Activated naive CD8-positive, alpha-beta T cell treated with anti-CD3 and anti-CD28 coated beads, Interleukin-2, amount 10 ng/mL, durations not matched to agents 7 days and 5 days (primary cell): ENCODE measurements at regions of chr15 and their contacts with region 1.

Region 1: GRCh38 chr15:31365655-31366127 is 39.1 kb downstream of the KLF13 start:
- DNase-seq: peak; percentile 84
- ATAC-seq: peak; percentile 57
- H3K4me3 Mint-ChIP-seq: peak overlapping the region; percentile 84
- H3K27ac Mint-ChIP-seq: peak overlapping the region; percentile 100
- H3K4me1 Mint-ChIP-seq: peaks cover 93% of the 10 kb centered on the region
- H3K27me3 Mint-ChIP-seq: no peaks in the 10 kb centered on the region

Region 2: DNA sequence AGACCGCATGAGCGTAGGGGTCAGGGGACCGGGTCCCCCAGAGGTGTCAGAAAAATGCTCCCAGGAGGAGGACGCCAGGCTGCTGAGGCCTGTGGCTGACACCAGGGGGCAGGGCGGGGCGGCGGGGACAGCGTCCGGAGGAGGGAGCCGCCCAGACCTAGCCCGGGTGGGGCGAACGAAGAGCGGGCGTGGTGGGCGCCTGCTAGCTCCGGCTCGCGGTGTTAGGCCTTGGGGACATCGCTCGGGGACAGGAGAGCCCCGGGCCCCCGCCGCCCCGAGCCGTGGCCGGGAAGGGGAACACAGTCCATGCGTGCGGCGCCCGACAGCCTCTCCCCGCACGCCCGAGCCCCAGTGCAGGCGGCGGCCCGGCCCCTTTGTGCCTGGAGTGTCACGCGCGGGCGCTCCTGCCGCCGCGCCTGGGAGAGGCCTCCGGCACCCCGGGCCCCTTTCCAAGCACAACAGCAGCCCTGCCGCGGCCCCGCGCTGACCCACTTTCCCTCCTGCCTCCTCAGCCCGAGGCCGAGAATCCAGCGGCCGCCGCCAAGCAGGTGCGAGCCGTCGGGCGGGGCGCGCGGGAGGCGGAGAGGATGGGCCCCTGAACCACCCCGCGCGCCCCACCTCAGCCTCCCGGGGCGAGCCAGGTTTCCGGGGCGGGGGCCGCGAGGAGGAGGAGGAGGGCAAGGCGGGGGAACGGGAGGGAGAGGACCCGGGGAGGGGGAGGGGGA is 150.0 kb before region 1 on chr15:
- POLR2A ChIA-PET with region 1: interaction called, 12 read pairs
- DNase-seq: peak; percentile 92
- ATAC-seq: peak; percentile 74
- H3K4me3 Mint-ChIP-seq: peak overlapping the region; percentile 72
- H3K27ac Mint-ChIP-seq: peak overlapping the region; percentile 96
- H3K4me1 Mint-ChIP-seq: peaks cover 29% of the 10 kb centered on the region
- H3K27me3 Mint-ChIP-seq: peaks cover 3% of the 10 kb centered on the region

Region 3: GRCh38 chr15:31352911-31353811 is 12.5 kb before region 1 on chr15:
- POLR2A ChIA-PET with region 1: interaction called, 390 read pairs
- DNase-seq: peak; percentile 61
- ATAC-seq: peak; percentile 42
- H3K4me3 Mint-ChIP-seq: peak overlapping the region; percentile 80
- H3K27ac Mint-ChIP-seq: peak overlapping the region; percentile 100
- H3K4me1 Mint-ChIP-seq: peaks cover 83% of the 10 kb centered on the region
- H3K27me3 Mint-ChIP-seq: no peaks in the 10 kb centered on the region

Region 4: GRCh38 chr15:31381801-31382712 is 16.4 kb after region 1 on chr15:
- POLR2A ChIA-PET with region 1: interaction called, 11 read pairs
- DNase-seq: no peak
- ATAC-seq: no peak
- H3K4me3 Mint-ChIP-seq: no peak overlapping the region
- H3K27ac Mint-ChIP-seq: peak overlapping the region; percentile 8
- H3K4me1 Mint-ChIP-seq: peaks cover 45% of the 10 kb centered on the region
- H3K27me3 Mint-ChIP-seq: no peaks in the 10 kb centered on the region

Region 5: GRCh38 chr15:31391687-31392671 is 26.3 kb after region 1 on chr15:
- POLR2A ChIA-PET with region 1: interaction called, 49 read pairs
- DNase-seq: peak; percentile 93
- ATAC-seq: peak; percentile 80
- H3K4me3 Mint-ChIP-seq: peak overlapping the region; percentile 93
- H3K27ac Mint-ChIP-seq: peak overlapping the region; percentile 92
- H3K4me1 Mint-ChIP-seq: peaks cover 37% of the 10 kb centered on the region
- H3K27me3 Mint-ChIP-seq: no peaks in the 10 kb centered on the region

Region 6: GRCh38 chr15:31472636-31473384 is 107.1 kb after region 1 on chr15:
- POLR2A ChIA-PET with region 1: interaction called, 17 read pairs
- DNase-seq: peak; percentile 60
- ATAC-seq: peak; percentile 89
- H3K4me3 Mint-ChIP-seq: peak overlapping the region; percentile 80
- H3K27ac Mint-ChIP-seq: peak overlapping the region; percentile 91
- H3K4me1 Mint-ChIP-seq: peaks cover 38% of the 10 kb centered on the region
- H3K27me3 Mint-ChIP-seq: no peaks in the 10 kb centered on the region

Region 7: DNA sequence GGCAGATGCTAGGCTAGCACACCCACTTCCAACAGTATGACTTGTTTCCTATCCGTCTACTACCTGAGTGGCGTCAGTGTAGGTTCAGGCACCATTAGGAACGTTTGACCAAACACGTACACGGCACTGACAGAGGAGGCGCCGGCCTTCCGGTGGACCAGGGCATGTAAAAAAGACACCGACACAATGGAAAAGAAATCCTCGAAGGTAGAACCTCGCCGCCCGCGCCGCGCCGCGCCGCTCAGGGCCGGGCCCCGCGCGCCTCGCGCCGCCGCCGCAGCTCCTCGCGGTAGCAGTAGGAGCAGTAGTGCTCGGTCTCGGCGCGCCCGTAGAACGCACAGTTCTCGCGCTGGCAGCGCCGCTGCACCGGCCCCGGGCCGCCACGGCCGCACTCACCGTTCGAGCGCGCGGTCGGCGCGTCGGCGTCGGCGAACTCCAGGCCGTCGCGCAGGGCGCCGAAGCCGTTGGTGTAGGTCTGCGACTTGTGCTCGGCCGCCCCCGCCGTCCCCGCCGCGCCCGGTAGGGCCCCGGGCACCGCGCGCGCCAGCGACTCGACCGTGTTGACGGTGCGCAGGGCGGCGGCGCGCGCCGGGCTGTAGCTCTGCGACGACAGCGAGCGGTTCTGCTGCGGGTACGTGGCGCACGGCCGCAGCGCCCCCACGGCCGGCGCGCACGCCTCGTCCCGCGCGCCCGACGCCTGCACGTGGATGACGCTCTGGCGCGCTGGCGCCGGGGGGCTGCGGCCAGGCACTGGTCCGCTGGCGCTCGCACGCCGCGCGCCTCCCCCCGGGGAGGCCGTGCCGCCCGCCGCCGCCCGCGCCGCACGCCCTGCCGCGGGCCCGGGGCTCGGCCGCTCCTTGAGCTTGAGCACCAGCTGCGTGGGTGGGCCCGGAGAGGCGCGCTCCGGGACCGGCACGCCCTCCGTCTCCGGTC is 117.6 kb after region 1 on chr15:
- POLR2A ChIA-PET with region 1: interaction called, 14 read pairs
- DNase-seq: peak; percentile 73
- ATAC-seq: peak; percentile 56
- H3K4me3 Mint-ChIP-seq: peak overlapping the region; percentile 97
- H3K27ac Mint-ChIP-seq: peak overlapping the region; percentile 95
- H3K4me1 Mint-ChIP-seq: peaks cover 48% of the 10 kb centered on the region
- H3K27me3 Mint-ChIP-seq: no peaks in the 10 kb centered on the region